Activated T-helper 1 cell treated with anti-CD3 and anti-CD28 coated beads, Interleukin-12 subunit alpha, Interleukin-12 subunit beta, Interleukin-2, Interleukin-4 antibody, amounts not matched to agents 30 ng/mL and 10 ng/mL and 1 ng/mL, durations not matched to agents 14 hours and 24 hours and 36 hours (primary cell): ENCODE measurements at regions of chr3 and their contacts with region 1.

Region 1: DNA sequence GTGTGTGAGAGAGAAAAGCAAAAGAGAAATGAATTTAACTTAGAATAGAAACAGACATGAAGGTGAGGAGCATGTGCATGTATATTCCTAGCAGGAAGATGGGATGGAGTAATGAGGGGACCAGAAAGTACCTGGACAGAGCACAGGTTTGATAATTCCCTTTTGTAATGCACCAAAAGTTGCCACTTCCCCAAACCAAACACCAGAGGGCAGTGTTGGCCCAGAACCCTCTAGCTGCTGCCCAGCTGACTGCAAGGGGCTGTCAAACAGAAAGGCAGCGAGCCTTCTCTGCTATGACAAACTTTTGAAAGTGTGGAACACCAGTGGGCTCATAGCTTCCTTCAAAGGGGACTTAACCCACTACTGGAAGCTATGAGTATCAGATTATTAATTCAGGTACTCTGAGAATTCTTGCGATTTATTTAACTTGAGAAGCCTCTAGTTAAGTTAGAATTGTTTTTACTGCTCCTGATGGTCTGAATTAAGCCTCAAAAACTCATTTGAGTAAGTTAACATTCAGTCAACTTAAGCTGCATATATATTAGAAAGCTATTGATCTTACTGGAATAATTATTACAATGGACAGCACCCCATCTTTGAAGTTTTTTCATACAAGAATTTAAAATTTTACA is 234.9 kb downstream of the NEK10 start:
- DNase-seq: peak; percentile 32
- H3K4me3 Mint-ChIP-seq: no peak overlapping the region
- H3K27ac Mint-ChIP-seq: no peak overlapping the region
- H3K4me1 Mint-ChIP-seq: no peaks in the 10 kb centered on the region
- H3K27me3 Mint-ChIP-seq: no peaks in the 10 kb centered on the region

Region 2: GRCh38 chr3:27253831-27254230 is 119.5 kb after region 1 on chr3:
- intact Hi-C with region 1: loop called (anchors 1 kb)
- DNase-seq: no peak
- H3K4me3 Mint-ChIP-seq: no peak overlapping the region
- H3K27ac Mint-ChIP-seq: no peak overlapping the region
- H3K4me1 Mint-ChIP-seq: no peaks in the 10 kb centered on the region
- H3K27me3 Mint-ChIP-seq: no peaks in the 10 kb centered on the region

Region 3: GRCh38 chr3:27467545-27467944 is 333.3 kb after region 1 on chr3:
- intact Hi-C with region 1: loop called (anchors 5 kb)
- DNase-seq: no peak
- H3K4me3 Mint-ChIP-seq: no peak overlapping the region
- H3K27ac Mint-ChIP-seq: no peak overlapping the region
- H3K4me1 Mint-ChIP-seq: peaks cover 8% of the 10 kb centered on the region
- H3K27me3 Mint-ChIP-seq: no peaks in the 10 kb centered on the region

Region 4: DNA sequence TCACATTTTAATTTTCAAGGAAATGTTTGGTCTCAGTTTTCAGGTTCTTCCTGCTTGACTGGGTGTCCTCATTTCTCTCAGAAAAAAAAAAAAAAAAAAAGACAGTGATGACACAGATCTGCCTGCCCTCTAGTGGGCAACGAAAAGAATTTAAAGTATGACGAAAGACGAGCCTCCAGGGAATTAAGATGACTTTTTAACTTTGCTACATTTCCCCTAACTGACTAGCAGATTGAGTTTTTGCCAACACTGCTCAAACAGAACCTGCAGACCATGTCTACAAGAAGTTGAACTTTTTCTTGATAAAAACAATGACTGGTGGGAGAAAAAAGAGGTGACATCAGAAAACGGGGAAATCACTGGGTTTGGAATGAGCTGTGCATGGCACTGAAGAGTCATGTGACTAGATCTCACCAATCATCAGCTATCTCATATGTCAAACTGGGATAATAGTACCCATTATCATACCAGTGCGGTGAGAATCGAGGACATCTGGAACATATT is 547.0 kb after region 1 on chr3:
- intact Hi-C with region 1: loop called (anchors 2 kb)
- DNase-seq: no peak
- H3K4me3 Mint-ChIP-seq: peak overlapping the region; percentile 41
- H3K27ac Mint-ChIP-seq: peak overlapping the region; percentile 67
- H3K4me1 Mint-ChIP-seq: peaks cover 10% of the 10 kb centered on the region
- H3K27me3 Mint-ChIP-seq: peaks cover 5% of the 10 kb centered on the region